Sigmoid colon (tissue), 7 donors: ENCODE measurements at regions of chr14 and their contacts with region 1.

Region 1: DNA sequence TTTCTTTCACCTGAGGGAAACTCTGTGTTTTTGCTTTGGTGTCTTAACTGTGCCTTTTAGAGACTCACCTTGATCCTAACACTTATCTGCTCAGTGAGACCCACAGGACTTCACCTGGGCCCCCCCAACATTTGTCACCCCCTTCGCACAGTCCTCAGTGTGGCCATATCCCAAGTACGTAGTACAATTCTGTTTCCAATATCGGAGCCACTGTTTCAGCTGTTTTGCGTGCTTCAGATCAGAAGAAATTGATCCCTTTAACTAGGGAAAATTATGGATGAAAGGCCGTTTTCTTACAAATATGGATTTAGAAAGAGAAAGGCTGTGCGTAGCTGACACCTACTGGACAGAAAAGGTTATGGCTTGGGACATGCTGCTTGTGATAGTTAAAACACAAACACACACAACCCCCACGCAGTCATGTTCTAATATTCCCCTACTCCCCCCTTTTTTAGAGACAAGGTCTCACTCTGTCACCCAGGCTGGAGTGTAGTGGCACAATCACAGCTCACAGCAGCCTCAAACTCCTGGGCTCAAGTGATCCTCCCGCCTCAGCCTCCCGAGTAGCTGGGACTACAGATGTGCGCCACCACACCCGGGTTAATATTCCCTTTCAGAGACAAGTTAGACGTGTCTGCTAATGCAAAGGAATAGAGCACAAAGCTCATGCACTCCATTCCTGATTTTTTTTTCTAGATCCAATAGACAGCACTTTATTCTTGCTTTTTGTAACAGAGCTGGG is 3.6 kb upstream of the SLC7A8 start:
- DNase-seq: no peak
- H3K4me3 ChIP-seq: no peak overlapping the region
- H3K27ac ChIP-seq: no peak overlapping the region
- H3K4me1 ChIP-seq: peaks cover 0 to 15% (median 10%) of the 10 kb centered on the region in 4 donors
- H3K27me3 ChIP-seq: peaks cover 0 to 7% (median 0%) of the 10 kb centered on the region in 3 donors
- CTCF ChIP-seq: peak; percentile 79 to 96 (median 92)
- EP300 ChIP-seq: no peak
- POLR2A ChIP-seq: no peak

Region 2: DNA sequence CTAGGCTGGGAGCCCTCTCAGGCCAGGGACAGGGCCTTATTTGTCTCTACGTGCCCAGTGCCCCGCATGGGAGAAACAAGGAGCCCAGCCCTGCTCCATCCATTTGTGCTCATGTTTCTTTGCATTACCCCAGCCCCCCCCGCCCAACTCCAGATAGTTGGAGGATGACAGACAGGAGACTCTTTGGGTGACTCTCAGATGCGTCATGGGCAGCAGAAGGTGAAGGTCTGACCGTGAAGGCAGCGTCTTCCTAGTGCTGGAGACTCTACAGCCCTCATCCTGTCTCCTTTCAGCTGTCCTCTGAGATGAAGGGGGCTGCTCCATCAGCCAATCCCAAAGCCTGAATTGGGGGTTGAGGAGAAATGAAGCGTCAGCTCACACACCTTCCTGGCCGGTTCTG is 145.4 kb before region 1 on chr14:
- intact Hi-C with region 1: no loop called
- DNase-seq: no peak
- H3K4me3 ChIP-seq: no peak overlapping the region
- H3K27ac ChIP-seq: no peak overlapping the region
- H3K4me1 ChIP-seq: no peaks in the 10 kb centered on the region
- H3K27me3 ChIP-seq: no peaks in the 10 kb centered on the region
- CTCF ChIP-seq: no peak
- EP300 ChIP-seq: no peak
- POLR2A ChIP-seq: no peak

Region 3: GRCh38 chr14:23120541-23121251 is 66.4 kb before region 1 on chr14:
- intact Hi-C with region 1: loop called (anchors 1 kb)
- DNase-seq: peak; percentile 96
- H3K4me3 ChIP-seq: no peak overlapping the region
- H3K27ac ChIP-seq: peak overlapping the region in 1 of 4 donors; percentile 45
- H3K4me1 ChIP-seq: peaks cover 0 to 11% (median 9%) of the 10 kb centered on the region in 4 donors
- H3K27me3 ChIP-seq: peaks cover 0 to 4% (median 0%) of the 10 kb centered on the region in 3 donors
- CTCF ChIP-seq: peak; percentile 99 to 100 (median 100)
- EP300 ChIP-seq: no peak
- POLR2A ChIP-seq: no peak

Region 4: GRCh38 chr14:23567192-23568020 is 380.3 kb after region 1 on chr14 and contains the start of gene AP1G2:
- intact Hi-C with region 1: no loop called
- DNase-seq: peak; percentile 92
- H3K4me3 ChIP-seq: peak within 1 kb of the TSS; percentile 50 to 68 (median 60)
- H3K27ac ChIP-seq: peak within 1 kb of the TSS; percentile 62 to 73 (median 64)
- H3K4me1 ChIP-seq: peaks cover 0 to 19% (median 10%) of the 10 kb centered on the region in 4 donors
- H3K27me3 ChIP-seq: peaks cover 0 to 17% (median 0%) of the 10 kb centered on the region in 3 donors
- CTCF ChIP-seq: no peak
- EP300 ChIP-seq: no peak
- POLR2A ChIP-seq: peak in 1 of 2 donors; percentile 55
- total RNA-seq, gene AP1G2: 16.4 to 37.1 (median 26.3) TPM